Mammary epithelial cell (primary cell): ENCODE measurements at regions of chr14 and their contacts with region 1.

Region 1: GRCh38 chr14:52313903-52314594 is at the start of gene PTGER2:
- DNase-seq: peak; percentile 93
- H3K4me3 ChIP-seq: peak within 1 kb of the TSS; percentile 45 to 65 (median 58)
- H3K27ac ChIP-seq: peak within 1 kb of the TSS; percentile 39
- H3K4me1 ChIP-seq: peaks cover 26% of the 10 kb centered on the region
- H3K27me3 ChIP-seq: no peaks in the 10 kb centered on the region
- CTCF ChIP-seq: no peak
- total RNA-seq, gene PTGER2: 0.49 to 2.8 TPM

Region 2: GRCh38 chr14:52351233-52352060 is 37.4 kb after region 1 on chr14:
- CTCF ChIA-PET with region 1: no interaction called
- dilution Hi-C with region 1: no loop called
- in situ Hi-C with region 1: no loop called
- intact Hi-C with region 1: no loop called
- DNase-seq: peak; percentile 49
- H3K4me3 ChIP-seq: no peak overlapping the region
- H3K27ac ChIP-seq: no peak overlapping the region
- H3K4me1 ChIP-seq: peaks cover 44% of the 10 kb centered on the region
- H3K27me3 ChIP-seq: no peaks in the 10 kb centered on the region
- CTCF ChIP-seq: no peak

Region 3: DNA sequence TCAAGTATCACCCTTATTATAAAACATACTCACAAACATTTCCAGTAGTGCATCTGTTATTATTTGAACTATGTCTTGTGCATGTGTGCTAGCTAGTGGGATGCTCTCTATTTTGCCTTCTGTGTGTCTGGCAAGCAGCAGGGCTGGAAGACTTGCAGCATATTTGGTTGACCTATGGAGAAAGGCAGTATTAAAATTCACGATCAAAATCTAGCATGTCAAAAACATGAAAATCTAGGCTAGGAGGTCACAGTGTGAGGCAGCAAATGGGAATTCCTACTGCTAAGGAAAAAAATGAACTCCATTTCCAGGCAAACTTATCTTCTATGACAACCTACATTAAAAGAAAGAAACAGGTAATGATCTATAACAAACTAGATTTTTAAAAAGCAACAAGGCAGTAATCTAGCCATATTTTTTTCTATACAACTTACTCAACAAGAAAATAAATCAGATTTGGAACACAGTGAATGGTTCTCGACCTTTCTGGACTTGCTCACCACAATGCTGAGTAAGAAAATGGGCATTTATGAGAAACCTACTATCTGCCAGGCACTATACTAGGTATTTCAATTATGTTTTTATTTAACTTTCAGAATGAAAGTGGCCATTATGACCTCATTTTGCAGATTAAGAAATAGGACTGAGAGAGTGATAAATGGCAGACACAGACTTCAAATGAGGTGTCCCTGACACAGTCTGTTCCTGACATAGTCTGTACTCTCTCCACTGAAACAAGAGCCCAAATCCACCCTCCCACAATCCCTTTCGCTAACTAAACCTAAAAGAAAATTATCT is 141.4 kb after region 1 on chr14:
- CTCF ChIA-PET with region 1: no interaction called
- dilution Hi-C with region 1: no loop called
- in situ Hi-C with region 1: loop called in 1 of 2 experiments (anchors 5 kb)
- intact Hi-C with region 1: loop called (anchors 5 kb)
- DNase-seq: peak; percentile 78
- H3K4me3 ChIP-seq: no peak overlapping the region
- H3K27ac ChIP-seq: peak overlapping the region; percentile 44
- H3K4me1 ChIP-seq: peaks cover 34% of the 10 kb centered on the region
- H3K27me3 ChIP-seq: no peaks in the 10 kb centered on the region
- CTCF ChIP-seq: no peak